T-cell (primary cell): ENCODE measurements at regions of chr3 and their contacts with region 1.

Region 1: DNA sequence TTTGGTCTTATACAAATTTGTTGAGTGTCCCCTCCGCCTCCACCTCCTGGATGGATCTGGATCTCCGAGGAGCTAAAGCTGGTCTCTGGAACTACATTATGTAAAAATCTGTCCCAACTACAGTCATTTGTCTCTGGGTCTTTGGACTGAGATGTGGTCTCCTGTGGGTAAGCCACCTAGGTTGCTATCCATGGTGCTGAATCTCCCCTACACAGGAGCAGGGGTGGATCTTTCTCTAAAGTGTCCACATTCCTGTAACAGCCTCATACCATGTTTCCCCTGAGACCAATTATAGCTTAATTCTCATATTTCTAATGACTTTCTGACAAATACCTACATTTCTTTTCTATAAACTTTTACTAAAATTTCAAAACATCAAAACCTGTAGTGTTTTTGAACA is 625.8 kb downstream of the TAFA4 start:
- DNase-seq: peak in 7 of 35 experiments; percentile 0 to 43 (median 4)
- ATAC-seq: no peak
- H3K4me3 ChIP-seq: no peak overlapping the region
- H3K4me3 Mint-ChIP-seq: no peak overlapping the region
- H3K27ac ChIP-seq: no peak overlapping the region
- H3K27ac Mint-ChIP-seq: no peak overlapping the region
- H3K4me1 ChIP-seq: no peaks in the 10 kb centered on the region
- H3K4me1 Mint-ChIP-seq: no peaks in the 10 kb centered on the region
- H3K27me3 ChIP-seq: no peaks in the 10 kb centered on the region
- H3K27me3 Mint-ChIP-seq: peaks cover 0 to 3% of the 10 kb centered on the region in 2 donors

Region 2: DNA sequence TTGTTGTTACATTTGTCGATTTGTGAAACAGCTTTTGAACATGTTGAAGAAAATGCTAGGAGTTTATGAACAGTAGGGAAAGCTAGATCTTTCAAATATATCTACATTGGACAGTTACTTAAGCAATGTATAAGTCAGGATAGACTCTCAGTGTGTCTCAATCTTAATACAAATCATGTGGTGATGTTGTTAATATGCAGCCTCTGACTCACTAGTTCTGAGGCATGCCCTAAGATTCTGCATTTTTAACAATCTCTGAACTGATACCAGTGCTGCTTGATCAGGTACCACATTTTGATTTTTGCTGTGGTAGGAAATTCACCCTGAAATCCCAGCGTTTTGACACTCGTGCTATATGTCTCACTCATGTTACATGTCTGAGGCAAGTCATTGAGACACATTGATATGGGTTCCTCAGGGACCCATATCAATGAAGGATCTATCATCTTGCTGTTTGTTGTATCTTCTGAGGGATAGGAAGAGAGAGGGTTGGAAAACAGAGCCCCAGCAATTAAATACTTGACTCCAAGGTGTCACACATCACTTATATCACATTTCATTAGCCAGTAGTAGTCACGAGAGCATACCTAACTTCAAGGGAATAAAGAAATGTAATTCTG is 27.9 kb after region 1 on chr3:
- CTCF ChIA-PET with region 1: no interaction called
- POLR2A ChIA-PET with region 1: no interaction called
- DNase-seq: no peak
- ATAC-seq: no peak
- H3K4me3 ChIP-seq: no peak overlapping the region
- H3K4me3 Mint-ChIP-seq: no peak overlapping the region
- H3K27ac ChIP-seq: no peak overlapping the region
- H3K27ac Mint-ChIP-seq: no peak overlapping the region
- H3K4me1 ChIP-seq: no peaks in the 10 kb centered on the region
- H3K4me1 Mint-ChIP-seq: no peaks in the 10 kb centered on the region
- H3K27me3 ChIP-seq: no peaks in the 10 kb centered on the region
- H3K27me3 Mint-ChIP-seq: peaks cover 0 to 4% of the 10 kb centered on the region in 2 donors

Region 3: GRCh38 chr3:68408626-68409025 is 102.1 kb after region 1 on chr3:
- CTCF ChIA-PET with region 1: no interaction called
- POLR2A ChIA-PET with region 1: no interaction called
- DNase-seq: no peak
- ATAC-seq: no peak
- H3K4me3 ChIP-seq: no peak overlapping the region
- H3K4me3 Mint-ChIP-seq: no peak overlapping the region
- H3K27ac ChIP-seq: no peak overlapping the region
- H3K27ac Mint-ChIP-seq: no peak overlapping the region
- H3K4me1 ChIP-seq: no peaks in the 10 kb centered on the region
- H3K4me1 Mint-ChIP-seq: no peaks in the 10 kb centered on the region
- H3K27me3 ChIP-seq: no peaks in the 10 kb centered on the region
- H3K27me3 Mint-ChIP-seq: no peaks in the 10 kb centered on the region

Region 4: GRCh38 chr3:68504201-68504600 is 197.6 kb after region 1 on chr3:
- CTCF ChIA-PET with region 1: no interaction called
- POLR2A ChIA-PET with region 1: interaction called in 1 of 2 experiments, 13 read pairs
- DNase-seq: no peak
- ATAC-seq: no peak
- H3K4me3 ChIP-seq: no peak overlapping the region
- H3K4me3 Mint-ChIP-seq: no peak overlapping the region
- H3K27ac ChIP-seq: no peak overlapping the region
- H3K27ac Mint-ChIP-seq: no peak overlapping the region
- H3K4me1 ChIP-seq: no peaks in the 10 kb centered on the region
- H3K4me1 Mint-ChIP-seq: no peaks in the 10 kb centered on the region
- H3K27me3 ChIP-seq: no peaks in the 10 kb centered on the region
- H3K27me3 Mint-ChIP-seq: no peaks in the 10 kb centered on the region

Region 5: GRCh38 chr3:68515237-68515636 is 208.7 kb after region 1 on chr3:
- CTCF ChIA-PET with region 1: no interaction called
- POLR2A ChIA-PET with region 1: no interaction called
- DNase-seq: no peak
- ATAC-seq: no peak
- H3K4me3 ChIP-seq: no peak overlapping the region
- H3K4me3 Mint-ChIP-seq: no peak overlapping the region
- H3K27ac ChIP-seq: no peak overlapping the region
- H3K27ac Mint-ChIP-seq: no peak overlapping the region
- H3K4me1 ChIP-seq: no peaks in the 10 kb centered on the region
- H3K4me1 Mint-ChIP-seq: no peaks in the 10 kb centered on the region
- H3K27me3 ChIP-seq: no peaks in the 10 kb centered on the region
- H3K27me3 Mint-ChIP-seq: no peaks in the 10 kb centered on the region